ENCODE measurements at regions of chr6 and their contacts with region 1.

Region 1: GRCh38 chr6:27545271-27546046 is 72.6 kb upstream of the ZNF184 start:
- DNase-seq: peak; percentile 43
- H3K4me3 ChIP-seq: peak overlapping the region; percentile 0 to 74 (median 73)
- H3K27ac ChIP-seq: no peak overlapping the region
- H3K4me1 ChIP-seq: peaks cover 13% of the 10 kb centered on the region
- H3K27me3 ChIP-seq: peaks cover 0 to 6% of the 10 kb centered on the region in 2 experiments
- CTCF ChIP-seq: no peak
- POLR2A ChIP-seq: no peak

Region 2: GRCh38 chr6:27237089-27237803 is 308.2 kb before region 1 on chr6:
- CTCF ChIA-PET with region 1: no interaction called
- POLR2A ChIA-PET with region 1: no interaction called
- dilution Hi-C with region 1: no loop called
- intact Hi-C with region 1: loop called (anchors 5 kb)
- DNase-seq: peak; percentile 30
- H3K4me3 ChIP-seq: peak overlapping the region in 2 of 3 experiments; percentile 61 to 65
- H3K27ac ChIP-seq: no peak overlapping the region
- H3K4me1 ChIP-seq: peaks cover 12% of the 10 kb centered on the region
- H3K27me3 ChIP-seq: peaks cover 0 to 3% of the 10 kb centered on the region in 2 experiments
- CTCF ChIP-seq: no peak
- POLR2A ChIP-seq: no peak

Region 3: DNA sequence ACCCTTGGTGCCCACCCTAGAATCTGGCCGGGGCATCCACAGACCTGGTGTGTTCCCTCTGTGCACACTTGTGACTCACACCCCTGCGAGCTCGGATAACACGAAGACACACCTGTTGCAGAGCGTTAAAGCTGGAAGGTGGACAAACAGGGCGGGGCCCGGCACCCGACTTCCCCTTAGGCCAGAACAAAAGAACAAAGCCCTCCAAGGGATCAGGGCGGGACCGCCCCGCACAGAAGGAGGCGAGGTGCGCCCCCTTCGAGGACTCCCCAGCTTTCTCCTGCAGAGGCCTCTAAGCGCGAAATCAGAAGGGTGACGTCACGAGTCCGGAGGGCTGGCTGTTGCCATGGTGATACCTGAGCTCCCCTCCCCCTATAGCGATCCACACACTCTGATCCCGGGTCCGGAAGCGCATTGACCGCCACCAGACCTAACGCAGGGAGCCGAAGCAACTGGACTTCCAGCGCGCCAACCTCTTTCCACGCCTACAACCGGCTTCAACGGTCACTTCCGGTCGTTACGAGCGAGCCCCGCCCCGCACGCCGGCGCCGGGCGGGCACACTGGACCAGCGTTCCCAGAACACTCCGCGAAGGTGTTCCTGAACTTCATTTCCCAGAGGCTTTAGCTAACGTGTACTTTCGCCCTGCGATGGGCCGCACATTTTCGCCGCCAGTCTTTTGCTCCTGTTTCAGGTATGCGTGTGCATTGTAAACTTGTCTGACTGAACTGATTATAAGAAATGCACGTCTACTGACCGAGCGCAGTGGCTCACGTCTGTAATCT is 72.7 kb before region 1 on chr6 and contains the start of gene ZNF184:
- CTCF ChIA-PET with region 1: no interaction called
- POLR2A ChIA-PET with region 1: no interaction called
- dilution Hi-C with region 1: no loop called
- intact Hi-C with region 1: loop called (anchors 2 kb)
- DNase-seq: peak; percentile 98
- H3K4me3 ChIP-seq: peak within 1 kb of the TSS; percentile 68 to 94 (median 82)
- H3K27ac ChIP-seq: peak within 1 kb of the TSS; percentile 74
- H3K4me1 ChIP-seq: peaks cover 9% of the 10 kb centered on the region
- H3K27me3 ChIP-seq: peaks cover 9 to 14% of the 10 kb centered on the region in 2 experiments
- CTCF ChIP-seq: no peak
- POLR2A ChIP-seq: peak; percentile 84
- total RNA-seq, gene ZNF184: 5.4 and 6.5 TPM in 2 replicates

Region 4: DNA sequence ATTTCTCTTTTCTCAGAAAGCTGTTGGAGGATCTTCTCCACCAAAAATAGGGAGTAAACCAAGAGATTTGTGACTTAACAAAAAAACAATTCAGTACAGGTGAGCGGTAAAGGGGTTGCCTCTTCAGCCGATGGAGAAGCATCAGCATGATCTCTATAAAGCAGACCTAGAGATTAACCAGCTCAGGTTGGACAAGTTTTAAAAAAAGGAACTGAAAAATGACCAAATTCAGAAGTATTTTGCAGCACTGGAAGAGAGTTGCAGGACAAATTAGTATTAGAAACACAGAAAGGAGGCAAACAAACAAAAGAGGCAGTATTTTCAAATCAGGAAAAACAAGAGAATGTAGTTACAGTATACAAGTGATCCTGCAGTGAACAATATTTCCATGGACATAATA is 32.9 kb before region 1 on chr6:
- CTCF ChIA-PET with region 1: no interaction called
- POLR2A ChIA-PET with region 1: no interaction called
- dilution Hi-C with region 1: no loop called
- intact Hi-C with region 1: no loop called
- DNase-seq: no peak
- H3K4me3 ChIP-seq: no peak overlapping the region
- H3K27ac ChIP-seq: no peak overlapping the region
- H3K4me1 ChIP-seq: no peaks in the 10 kb centered on the region
- H3K27me3 ChIP-seq: peaks cover 33 to 42% of the 10 kb centered on the region in 2 experiments
- CTCF ChIP-seq: no peak
- POLR2A ChIP-seq: no peak

Region 5: DNA sequence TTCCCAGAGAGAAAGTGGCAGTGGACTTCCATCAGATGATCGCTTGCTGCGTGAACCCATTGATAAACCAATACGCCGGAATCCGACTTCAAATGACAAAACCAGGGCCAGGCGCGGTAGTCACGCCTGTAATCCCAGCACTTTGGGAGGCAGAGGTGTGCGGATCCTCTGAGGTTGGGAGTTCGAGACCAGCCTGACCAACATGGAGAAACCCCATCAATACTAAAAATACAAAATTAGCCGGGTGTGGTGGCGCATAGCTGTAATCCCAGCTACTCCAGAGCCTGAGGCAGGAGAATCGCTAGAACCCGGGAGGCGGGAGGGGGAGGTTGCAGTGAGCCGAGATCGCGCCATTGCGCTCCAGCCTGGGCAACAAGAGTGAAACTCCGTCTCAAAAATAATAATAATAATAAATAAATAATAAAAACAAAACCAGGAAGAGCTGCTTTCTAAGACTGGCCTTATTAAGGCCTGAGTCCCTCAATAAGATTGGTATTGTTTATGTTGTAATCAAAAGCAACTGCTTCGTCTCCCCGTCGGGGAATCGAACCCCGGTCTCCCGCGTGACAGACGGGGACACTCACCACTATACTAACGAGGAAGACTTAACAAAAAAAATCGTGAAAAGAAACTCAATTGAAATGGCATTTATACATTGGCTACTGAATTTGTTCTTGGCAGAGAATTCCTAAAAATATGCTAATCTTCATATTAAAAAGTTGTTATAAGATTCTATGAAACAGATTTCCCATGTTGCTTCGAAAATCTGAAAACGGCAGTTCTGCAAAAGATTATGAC is 37.7 kb after region 1 on chr6:
- CTCF ChIA-PET with region 1: no interaction called
- POLR2A ChIA-PET with region 1: no interaction called
- dilution Hi-C with region 1: no loop called
- intact Hi-C with region 1: loop called (anchors 2 kb)
- DNase-seq: peak; percentile 60
- H3K4me3 ChIP-seq: no peak overlapping the region
- H3K27ac ChIP-seq: no peak overlapping the region
- H3K4me1 ChIP-seq: no peaks in the 10 kb centered on the region
- H3K27me3 ChIP-seq: peaks cover 6 to 16% of the 10 kb centered on the region in 2 experiments
- CTCF ChIP-seq: no peak
- POLR2A ChIP-seq: no peak

Region 6: GRCh38 chr6:27700337-27700736 is 154.9 kb after region 1 on chr6:
- CTCF ChIA-PET with region 1: no interaction called
- POLR2A ChIA-PET with region 1: no interaction called
- dilution Hi-C with region 1: no loop called
- intact Hi-C with region 1: no loop called
- DNase-seq: no peak
- H3K4me3 ChIP-seq: no peak overlapping the region
- H3K27ac ChIP-seq: no peak overlapping the region
- H3K4me1 ChIP-seq: no peaks in the 10 kb centered on the region
- H3K27me3 ChIP-seq: no peaks in the 10 kb centered on the region
- CTCF ChIP-seq: no peak
- POLR2A ChIP-seq: no peak